Naive thymus-derived CD4-positive, alpha-beta T cell (primary cell): ENCODE measurements at regions of chr7 and their contacts with region 1.

Region 1: DNA sequence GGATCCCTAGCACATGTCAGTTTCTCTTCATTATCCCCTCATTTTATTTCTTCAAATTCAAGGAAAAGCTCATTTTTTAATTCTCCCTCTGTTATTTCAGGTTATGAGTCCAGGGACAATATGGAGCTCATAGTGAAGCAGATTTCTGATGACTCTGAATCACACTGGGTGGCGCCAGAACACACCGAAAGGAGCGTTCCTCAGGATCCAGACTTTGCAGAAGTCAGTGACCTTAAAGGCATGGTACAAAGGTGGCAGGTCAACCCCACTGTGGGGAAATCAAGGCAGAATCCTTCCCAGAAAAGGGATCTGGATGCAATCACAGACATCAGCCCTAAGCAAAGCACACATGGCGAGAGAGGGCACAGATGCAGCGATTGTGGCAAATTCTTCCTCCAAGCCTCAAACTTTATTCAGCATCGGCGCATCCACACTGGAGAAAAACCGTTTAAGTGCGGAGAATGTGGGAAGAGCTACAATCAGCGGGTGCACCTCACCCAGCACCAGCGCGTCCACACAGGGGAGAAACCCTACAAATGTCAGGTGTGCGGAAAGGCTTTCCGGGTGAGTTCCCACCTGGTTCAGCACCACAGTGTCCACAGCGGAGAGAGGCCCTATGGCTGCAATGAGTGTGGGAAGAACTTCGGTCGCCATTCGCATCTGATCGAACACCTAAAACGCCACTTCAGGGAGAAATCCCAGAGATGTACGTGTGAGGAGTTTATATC is 21.4 kb downstream of the ZKSCAN5 start:
- DNase-seq: peak in 3 of 9 donors; percentile 7 to 23 (median 21)
- ATAC-seq: peak; percentile 53
- H3K4me3 ChIP-seq: no peak overlapping the region
- H3K4me3 Mint-ChIP-seq: no peak overlapping the region
- H3K27ac ChIP-seq: no peak overlapping the region
- H3K27ac Mint-ChIP-seq: peak overlapping the region in 5 of 9 donors; percentile 3 to 74 (median 32)
- H3K4me1 ChIP-seq: no peaks in the 10 kb centered on the region
- H3K4me1 Mint-ChIP-seq: peaks cover 0 to 6% (median 0%) of the 10 kb centered on the region in 7 donors
- H3K27me3 ChIP-seq: no peaks in the 10 kb centered on the region
- H3K27me3 Mint-ChIP-seq: no peaks in the 10 kb centered on the region

Region 2: GRCh38 chr7:99498546-99498944 is 27.3 kb before region 1 on chr7:
- CTCF ChIA-PET with region 1: no interaction called
- POLR2A ChIA-PET with region 1: no interaction called
- intact Hi-C with region 1: no loop called
- DNase-seq: no peak
- ATAC-seq: no peak
- H3K4me3 ChIP-seq: peak overlapping the region; percentile 99
- H3K4me3 Mint-ChIP-seq: peak overlapping the region; percentile 95 to 100 (median 98)
- H3K27ac ChIP-seq: peak overlapping the region; percentile 98
- H3K27ac Mint-ChIP-seq: peak overlapping the region; percentile 86 to 100 (median 98)
- H3K4me1 ChIP-seq: peaks cover 19 to 23% of the 10 kb centered on the region in 2 donors
- H3K4me1 Mint-ChIP-seq: peaks cover 14 to 41% (median 35%) of the 10 kb centered on the region in 7 donors
- H3K27me3 ChIP-seq: no peaks in the 10 kb centered on the region
- H3K27me3 Mint-ChIP-seq: no peaks in the 10 kb centered on the region

Region 3: DNA sequence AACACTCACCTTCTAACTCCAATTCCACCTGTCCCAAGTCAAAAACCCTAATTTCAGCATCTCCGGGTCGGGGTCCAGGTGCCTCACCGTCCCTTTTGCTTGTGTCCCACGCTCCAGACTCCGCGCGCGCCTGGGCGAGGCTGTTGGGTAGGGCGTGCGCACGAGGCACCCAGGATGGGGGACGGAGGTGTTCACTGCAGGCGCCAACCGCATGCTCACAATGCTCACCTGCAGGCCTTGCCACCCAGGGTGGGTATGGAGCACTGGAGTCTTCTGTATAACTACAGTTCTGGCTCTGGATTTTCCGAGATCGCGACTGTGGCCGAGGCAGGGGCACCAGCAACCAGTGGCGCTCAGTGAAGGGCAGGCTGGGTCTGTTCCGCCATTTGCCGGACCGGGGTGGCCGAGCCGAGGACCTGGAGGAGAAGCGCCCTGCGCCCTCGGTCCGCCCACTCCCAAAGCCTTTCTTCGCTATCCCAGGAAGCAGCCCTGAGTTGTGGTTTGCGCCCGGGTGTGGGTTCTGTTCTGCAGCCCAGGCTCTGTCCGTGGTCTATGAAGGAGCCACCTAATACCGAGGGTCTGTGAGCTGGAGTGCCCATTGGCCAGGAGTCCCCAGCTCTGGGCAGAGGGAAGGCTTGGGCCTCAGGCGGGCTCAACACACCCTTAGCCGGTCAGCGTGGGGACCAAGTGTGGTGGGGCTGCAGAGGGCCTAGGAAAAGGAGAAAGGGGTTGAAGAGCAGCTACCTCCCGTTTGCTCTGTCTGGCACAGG is 17.4 kb after region 1 on chr7:
- CTCF ChIA-PET with region 1: no interaction called
- POLR2A ChIA-PET with region 1: no interaction called
- intact Hi-C with region 1: no loop called
- DNase-seq: no peak
- ATAC-seq: no peak
- H3K4me3 ChIP-seq: no peak overlapping the region
- H3K4me3 Mint-ChIP-seq: no peak overlapping the region
- H3K27ac ChIP-seq: no peak overlapping the region
- H3K27ac Mint-ChIP-seq: no peak overlapping the region
- H3K4me1 ChIP-seq: no peaks in the 10 kb centered on the region
- H3K4me1 Mint-ChIP-seq: no peaks in the 10 kb centered on the region
- H3K27me3 ChIP-seq: no peaks in the 10 kb centered on the region
- H3K27me3 Mint-ChIP-seq: no peaks in the 10 kb centered on the region

Region 4: DNA sequence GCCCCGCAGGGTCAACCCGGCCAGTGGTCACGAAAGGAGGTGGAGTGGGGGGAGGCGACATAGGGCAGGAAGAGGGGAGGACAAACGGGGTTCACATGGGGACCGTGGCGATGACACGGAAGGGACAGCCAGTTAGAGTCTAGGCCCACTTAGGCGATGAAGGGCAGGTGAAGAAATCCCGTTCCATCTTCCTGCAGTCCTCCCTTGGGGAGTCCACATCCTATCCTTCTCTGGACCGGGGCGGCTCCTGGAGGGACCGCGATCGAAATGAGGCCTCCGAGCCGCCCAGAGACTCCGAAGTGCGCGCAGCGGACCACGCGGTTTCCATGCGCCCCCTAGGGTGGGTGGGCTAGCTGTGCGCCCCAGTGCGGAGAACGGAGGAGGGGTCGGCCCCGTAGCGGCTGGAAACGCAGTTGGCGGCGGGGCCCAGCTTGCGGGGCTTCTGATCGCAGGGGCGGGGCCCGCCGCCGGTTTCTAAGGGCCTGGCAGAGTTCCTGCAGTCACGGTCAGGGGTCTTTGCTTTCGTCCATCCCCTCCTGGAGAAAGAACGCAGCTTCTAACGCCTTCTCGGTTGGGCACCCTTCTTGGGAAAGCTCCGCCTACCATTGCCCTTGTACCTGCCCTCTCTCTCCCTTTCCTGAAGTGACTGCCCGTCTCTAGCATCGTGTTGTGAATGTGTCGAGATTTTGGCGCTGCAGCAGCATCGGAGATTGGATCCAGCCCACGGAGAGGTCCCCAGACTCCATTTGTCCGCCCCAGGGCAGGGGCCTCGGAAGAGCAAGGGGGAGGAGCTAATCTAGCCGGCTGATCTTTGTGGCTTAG is 54.3 kb after region 1 on chr7:
- CTCF ChIA-PET with region 1: interaction called, 5 read pairs
- POLR2A ChIA-PET with region 1: no interaction called
- intact Hi-C with region 1: loop called in 1 of 2 experiments (anchors 2 kb)
- DNase-seq: peak; percentile 40 to 60 (median 53)
- ATAC-seq: peak; percentile 85
- H3K4me3 ChIP-seq: peak overlapping the region; percentile 77
- H3K4me3 Mint-ChIP-seq: peak overlapping the region; percentile 87 to 98 (median 94)
- H3K27ac ChIP-seq: peak overlapping the region; percentile 73
- H3K27ac Mint-ChIP-seq: peak overlapping the region; percentile 19 to 96 (median 86)
- H3K4me1 ChIP-seq: peaks cover 3 to 4% of the 10 kb centered on the region in 2 donors
- H3K4me1 Mint-ChIP-seq: peaks cover 0 to 24% (median 17%) of the 10 kb centered on the region in 7 donors
- H3K27me3 ChIP-seq: no peaks in the 10 kb centered on the region
- H3K27me3 Mint-ChIP-seq: peaks cover 0 to 3% (median 0%) of the 10 kb centered on the region in 5 donors

Region 5: DNA sequence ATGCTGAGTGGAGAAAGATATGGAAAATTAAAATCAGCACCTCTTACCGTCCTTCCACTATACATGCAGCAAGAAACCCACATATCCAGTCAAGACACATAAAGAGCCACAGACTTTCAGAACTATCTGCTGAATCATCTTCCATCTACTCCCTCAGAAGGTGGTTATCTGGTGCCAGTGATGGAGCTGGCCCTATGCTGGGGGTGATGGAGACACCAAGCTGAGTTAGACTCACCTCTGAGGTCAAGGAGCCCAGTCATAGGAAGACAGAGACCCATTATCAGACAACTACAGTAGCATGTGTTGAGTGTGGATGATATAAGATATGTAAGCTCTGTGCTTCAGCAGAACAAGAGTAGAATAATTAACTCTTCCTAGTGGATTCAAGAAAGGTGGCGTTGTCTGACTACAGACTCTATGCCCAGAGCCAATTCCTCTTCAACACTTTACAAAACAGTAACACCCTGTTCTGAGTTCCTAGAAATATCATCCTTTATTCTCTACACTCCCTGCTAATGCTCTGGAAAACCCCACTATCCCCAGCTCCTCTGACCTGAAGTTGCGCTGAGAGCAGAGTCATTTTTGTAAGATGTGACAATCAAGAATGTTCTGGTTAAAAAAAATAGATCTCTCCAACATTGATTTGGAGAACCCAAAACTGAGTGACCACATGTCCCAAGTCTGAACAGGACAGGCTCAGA is 139.6 kb after region 1 on chr7:
- CTCF ChIA-PET with region 1: no interaction called
- POLR2A ChIA-PET with region 1: no interaction called
- intact Hi-C with region 1: no loop called
- DNase-seq: no peak
- ATAC-seq: no peak
- H3K4me3 ChIP-seq: no peak overlapping the region
- H3K4me3 Mint-ChIP-seq: no peak overlapping the region
- H3K27ac ChIP-seq: no peak overlapping the region
- H3K27ac Mint-ChIP-seq: peak overlapping the region in 2 of 9 donors; percentile 16 to 66
- H3K4me1 ChIP-seq: no peaks in the 10 kb centered on the region
- H3K4me1 Mint-ChIP-seq: peaks cover 0 to 2% (median 0%) of the 10 kb centered on the region in 7 donors
- H3K27me3 ChIP-seq: no peaks in the 10 kb centered on the region
- H3K27me3 Mint-ChIP-seq: no peaks in the 10 kb centered on the region

Region 6: GRCh38 chr7:99693427-99694200 is 167.7 kb after region 1 on chr7:
- CTCF ChIA-PET with region 1: no interaction called
- POLR2A ChIA-PET with region 1: no interaction called
- intact Hi-C with region 1: no loop called
- DNase-seq: peak in 7 of 9 donors; percentile 49 to 78 (median 59)
- ATAC-seq: peak; percentile 74
- H3K4me3 ChIP-seq: no peak overlapping the region
- H3K4me3 Mint-ChIP-seq: peak overlapping the region in 8 of 10 donors; percentile 1 to 66 (median 48)
- H3K27ac ChIP-seq: peak overlapping the region; percentile 0
- H3K27ac Mint-ChIP-seq: peak overlapping the region in 8 of 9 donors; percentile 61 to 92 (median 80)
- H3K4me1 ChIP-seq: no peaks in the 10 kb centered on the region
- H3K4me1 Mint-ChIP-seq: peaks cover 0 to 22% (median 21%) of the 10 kb centered on the region in 7 donors
- H3K27me3 ChIP-seq: no peaks in the 10 kb centered on the region
- H3K27me3 Mint-ChIP-seq: peaks cover 0 to 5% (median 0%) of the 10 kb centered on the region in 5 donors

Region 7: GRCh38 chr7:99837649-99838361 is 311.9 kb after region 1 on chr7:
- CTCF ChIA-PET with region 1: no interaction called
- POLR2A ChIA-PET with region 1: no interaction called
- intact Hi-C with region 1: loop called in 1 of 2 experiments (anchors 2 kb)
- DNase-seq: peak in 3 of 9 donors; percentile 2 to 12 (median 7)
- ATAC-seq: peak; percentile 45
- H3K4me3 ChIP-seq: no peak overlapping the region
- H3K4me3 Mint-ChIP-seq: peak overlapping the region in 2 of 10 donors; percentile 27 to 38
- H3K27ac ChIP-seq: no peak overlapping the region
- H3K27ac Mint-ChIP-seq: peak overlapping the region in 7 of 9 donors; percentile 1 to 73 (median 47)
- H3K4me1 ChIP-seq: no peaks in the 10 kb centered on the region
- H3K4me1 Mint-ChIP-seq: peaks cover 0 to 10% (median 6%) of the 10 kb centered on the region in 7 donors
- H3K27me3 ChIP-seq: no peaks in the 10 kb centered on the region
- H3K27me3 Mint-ChIP-seq: peaks cover 0 to 4% (median 2%) of the 10 kb centered on the region in 5 donors